CD8-positive, alpha-beta T cell (primary cell): ENCODE measurements at regions of chr7 and their contacts with region 1.

Region 1: GRCh38 chr7:28960071-28960828 is 2.1 kb upstream of the TRIL start:
- DNase-seq: no peak
- ATAC-seq: no peak
- H3K4me3 ChIP-seq: no peak overlapping the region
- H3K4me3 Mint-ChIP-seq: no peak overlapping the region
- H3K27ac ChIP-seq: no peak overlapping the region
- H3K27ac Mint-ChIP-seq: no peak overlapping the region
- H3K4me1 ChIP-seq: peaks cover 6% of the 10 kb centered on the region
- H3K4me1 Mint-ChIP-seq: peaks cover 14% of the 10 kb centered on the region
- H3K27me3 ChIP-seq: peaks cover 5 to 14% of the 10 kb centered on the region in 2 experiments
- H3K27me3 Mint-ChIP-seq: peaks cover 32% of the 10 kb centered on the region
- CTCF ChIP-seq: no peak

Region 2: GRCh38 chr7:28318101-28318762 is 642.0 kb before region 1 on chr7:
- CTCF ChIA-PET with region 1: no interaction called
- POLR2A ChIA-PET with region 1: no interaction called
- intact Hi-C with region 1: no loop called
- DNase-seq: no peak
- ATAC-seq: no peak
- H3K4me3 ChIP-seq: no peak overlapping the region
- H3K4me3 Mint-ChIP-seq: no peak overlapping the region
- H3K27ac ChIP-seq: no peak overlapping the region
- H3K27ac Mint-ChIP-seq: no peak overlapping the region
- H3K4me1 ChIP-seq: no peaks in the 10 kb centered on the region
- H3K4me1 Mint-ChIP-seq: peaks cover 3% of the 10 kb centered on the region
- H3K27me3 ChIP-seq: no peaks in the 10 kb centered on the region
- H3K27me3 Mint-ChIP-seq: peaks cover 18% of the 10 kb centered on the region
- CTCF ChIP-seq: no peak

Region 3: DNA sequence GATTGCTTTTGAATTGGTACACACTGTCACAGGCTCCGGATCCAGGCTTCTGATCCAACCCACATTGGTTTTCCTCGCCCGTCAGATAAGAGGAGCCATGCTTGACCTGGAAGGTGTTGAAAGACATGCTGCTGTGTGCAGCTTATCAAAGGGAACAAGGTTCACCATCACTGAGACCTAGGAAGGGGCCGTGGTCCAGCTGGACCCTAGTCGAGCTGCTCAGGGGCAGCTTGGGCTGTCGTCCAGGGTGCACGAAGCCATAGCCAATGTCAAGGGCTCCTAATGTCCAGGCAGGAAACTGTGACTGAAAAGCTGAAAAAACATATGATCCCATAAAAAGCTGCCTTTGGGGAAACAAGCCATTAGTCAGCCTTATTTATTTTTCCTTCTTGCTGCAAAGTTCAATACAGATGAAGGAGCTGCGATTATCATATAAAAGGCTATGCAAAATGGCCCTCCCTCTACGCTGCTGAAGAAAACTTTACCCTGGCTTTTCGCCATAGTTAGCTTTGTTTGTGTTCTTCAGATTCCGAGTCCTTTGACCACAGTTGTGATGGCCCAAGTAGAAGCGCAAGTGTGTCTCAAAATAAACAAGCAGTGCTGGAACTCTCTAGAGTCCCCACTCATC is 430.0 kb before region 1 on chr7:
- CTCF ChIA-PET with region 1: no interaction called
- POLR2A ChIA-PET with region 1: no interaction called
- intact Hi-C with region 1: no loop called
- DNase-seq: no peak
- ATAC-seq: no peak
- H3K4me3 ChIP-seq: no peak overlapping the region
- H3K4me3 Mint-ChIP-seq: no peak overlapping the region
- H3K27ac ChIP-seq: no peak overlapping the region
- H3K27ac Mint-ChIP-seq: no peak overlapping the region
- H3K4me1 ChIP-seq: no peaks in the 10 kb centered on the region
- H3K4me1 Mint-ChIP-seq: no peaks in the 10 kb centered on the region
- H3K27me3 ChIP-seq: no peaks in the 10 kb centered on the region
- H3K27me3 Mint-ChIP-seq: peaks cover 2% of the 10 kb centered on the region
- CTCF ChIP-seq: no peak

Region 4: DNA sequence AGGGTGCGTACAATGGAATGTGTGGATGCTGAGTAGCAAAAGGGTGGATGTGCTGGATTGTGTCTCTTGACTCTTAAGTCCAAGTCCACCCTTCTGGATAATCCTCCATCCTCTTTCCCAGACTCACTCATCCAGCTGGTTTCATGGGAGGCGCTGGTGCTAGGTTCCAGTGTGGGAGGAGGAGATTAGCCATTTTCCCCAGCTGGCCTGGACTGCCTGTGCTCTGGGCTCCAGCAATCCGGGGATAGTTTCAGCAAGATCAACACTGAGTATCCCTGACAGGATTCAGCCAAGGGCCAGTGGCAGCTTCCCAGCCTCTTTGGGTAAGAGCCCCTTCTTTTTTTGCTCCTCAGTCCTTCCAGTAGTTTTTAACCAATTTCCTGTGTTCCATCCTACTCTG is 19.5 kb after region 1 on chr7:
- CTCF ChIA-PET with region 1: interaction called, 3 read pairs
- POLR2A ChIA-PET with region 1: no interaction called
- intact Hi-C with region 1: loop called in 1 of 2 experiments (anchors 1 kb)
- DNase-seq: no peak
- ATAC-seq: no peak
- H3K4me3 ChIP-seq: no peak overlapping the region
- H3K4me3 Mint-ChIP-seq: no peak overlapping the region
- H3K27ac ChIP-seq: no peak overlapping the region
- H3K27ac Mint-ChIP-seq: no peak overlapping the region
- H3K4me1 ChIP-seq: no peaks in the 10 kb centered on the region
- H3K4me1 Mint-ChIP-seq: no peaks in the 10 kb centered on the region
- H3K27me3 ChIP-seq: no peaks in the 10 kb centered on the region
- H3K27me3 Mint-ChIP-seq: peaks cover 8% of the 10 kb centered on the region
- CTCF ChIP-seq: no peak

Region 5: DNA sequence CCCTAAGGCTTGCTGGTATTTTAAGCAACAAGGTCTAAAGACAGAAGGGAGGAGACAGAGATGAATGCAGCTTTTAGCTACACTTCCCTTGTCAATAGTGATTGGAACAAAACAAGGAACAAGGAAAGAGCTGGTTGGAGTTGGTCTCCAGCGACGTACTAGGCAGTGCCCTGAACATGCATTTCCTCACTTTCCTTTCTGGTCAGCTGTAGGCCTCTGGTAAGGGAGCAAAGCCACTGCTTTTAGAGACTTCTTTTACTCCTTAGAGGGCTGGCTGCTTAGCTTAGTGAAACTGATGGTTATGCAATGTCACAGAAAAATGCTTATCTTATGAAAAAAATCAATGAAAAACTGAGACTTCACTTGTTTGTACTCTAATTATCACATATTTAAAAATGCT is 73.3 kb after region 1 on chr7:
- CTCF ChIA-PET with region 1: no interaction called
- POLR2A ChIA-PET with region 1: no interaction called
- intact Hi-C with region 1: no loop called
- DNase-seq: no peak
- ATAC-seq: no peak
- H3K4me3 ChIP-seq: no peak overlapping the region
- H3K4me3 Mint-ChIP-seq: no peak overlapping the region
- H3K27ac ChIP-seq: no peak overlapping the region
- H3K27ac Mint-ChIP-seq: no peak overlapping the region
- H3K4me1 ChIP-seq: no peaks in the 10 kb centered on the region
- H3K4me1 Mint-ChIP-seq: no peaks in the 10 kb centered on the region
- H3K27me3 ChIP-seq: no peaks in the 10 kb centered on the region
- H3K27me3 Mint-ChIP-seq: no peaks in the 10 kb centered on the region
- CTCF ChIP-seq: no peak

Region 6: DNA sequence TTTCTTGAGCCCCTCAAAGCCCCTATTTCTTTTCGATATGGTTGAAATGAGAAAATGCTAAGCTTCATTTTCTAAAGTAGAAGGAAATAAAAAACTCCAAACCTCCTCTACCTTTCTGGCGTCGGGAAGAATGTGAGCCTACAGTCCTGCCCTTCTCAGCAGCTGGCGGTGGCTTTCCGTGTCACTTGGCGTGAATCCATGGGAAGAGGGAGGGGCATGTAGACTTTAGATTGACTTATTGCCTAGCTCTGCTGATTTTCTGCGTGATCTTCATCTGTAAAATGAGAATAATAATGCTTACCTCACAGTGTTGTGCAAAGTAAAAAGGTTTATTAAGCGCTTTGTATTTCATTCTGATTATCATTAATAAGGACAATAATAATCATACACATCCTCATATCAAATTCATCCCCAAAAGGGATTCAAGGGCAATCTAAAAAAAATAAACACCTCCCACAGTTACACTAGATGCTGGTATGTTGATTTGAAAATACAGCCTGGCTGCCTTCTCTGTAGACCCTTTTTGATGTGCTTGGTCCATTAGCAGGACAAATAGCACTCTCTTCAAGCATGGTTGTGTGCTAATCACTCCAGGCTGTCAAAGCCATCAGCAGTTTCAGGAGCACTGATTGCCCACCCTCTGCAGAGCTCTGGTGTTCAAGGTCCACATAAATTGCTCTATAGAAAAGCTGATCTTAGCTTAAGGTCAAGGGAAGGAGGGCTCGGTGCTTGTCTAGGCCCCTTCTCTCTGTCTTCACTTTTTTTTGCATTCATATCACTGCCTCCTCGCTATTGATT is 638.6 kb after region 1 on chr7:
- CTCF ChIA-PET with region 1: no interaction called
- POLR2A ChIA-PET with region 1: no interaction called
- intact Hi-C with region 1: no loop called
- DNase-seq: no peak
- ATAC-seq: no peak
- H3K4me3 ChIP-seq: no peak overlapping the region
- H3K4me3 Mint-ChIP-seq: no peak overlapping the region
- H3K27ac ChIP-seq: no peak overlapping the region
- H3K27ac Mint-ChIP-seq: no peak overlapping the region
- H3K4me1 ChIP-seq: no peaks in the 10 kb centered on the region
- H3K4me1 Mint-ChIP-seq: no peaks in the 10 kb centered on the region
- H3K27me3 ChIP-seq: no peaks in the 10 kb centered on the region
- H3K27me3 Mint-ChIP-seq: peaks cover 7% of the 10 kb centered on the region
- CTCF ChIP-seq: no peak